ENCODE measurements at regions of chr22 and their contacts with region 1.

Region 1: DNA sequence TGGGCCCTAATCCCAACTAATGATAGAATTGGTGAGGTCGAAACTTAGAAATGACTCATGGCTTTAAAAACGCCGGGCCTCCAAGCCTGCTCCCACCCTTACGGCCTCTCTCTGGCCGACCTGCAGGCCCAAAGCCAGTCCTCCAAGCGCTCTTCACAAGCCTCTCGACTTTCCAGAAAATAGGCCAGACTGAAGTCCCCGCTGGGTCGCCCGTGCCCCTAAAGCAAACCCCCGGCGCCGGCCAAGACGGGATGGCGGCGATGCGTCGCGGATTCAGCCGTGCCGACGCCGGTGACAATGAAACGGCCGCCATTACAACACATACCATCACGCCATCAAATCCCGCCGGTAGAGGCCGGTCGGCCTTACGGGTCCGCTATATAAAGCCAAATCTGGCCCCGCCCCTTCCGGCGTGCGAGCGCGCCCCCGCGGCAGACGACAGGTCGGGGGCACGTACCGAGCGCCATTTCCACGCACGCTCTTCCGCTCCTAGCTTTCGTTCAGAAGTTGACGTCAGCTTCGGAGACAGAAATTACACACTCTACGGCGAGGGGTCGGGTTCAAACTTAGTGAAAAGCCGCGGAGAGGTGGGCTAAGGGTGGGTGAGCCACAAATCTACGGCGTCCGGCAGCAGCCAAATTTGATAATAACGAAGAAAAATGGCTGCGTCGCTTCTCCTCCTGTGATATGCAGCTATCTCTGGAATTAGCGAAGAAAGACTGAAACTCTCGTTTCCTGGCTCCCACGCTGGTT is at the start of gene RPL3:
- DNase-seq: peak; percentile 98
- total RNA-seq, gene RPL3: 317 TPM

Region 2: GRCh38 chr22:39013942-39014722 is 305.3 kb before region 1 on chr22 and contains the start of gene APOBEC3C:
- intact Hi-C with region 1: loop called (anchors 10 kb)
- DNase-seq: peak; percentile 90
- total RNA-seq, gene APOBEC3C: 22.1 TPM

Region 3: GRCh38 chr22:39152511-39153219 is 166.8 kb before region 1 on chr22 and contains the start of gene CBX7:
- intact Hi-C with region 1: loop called (anchors 1 kb)
- DNase-seq: peak; percentile 97
- total RNA-seq, gene CBX7: 89.6 TPM

Region 4: GRCh38 chr22:39170825-39171622 is 148.4 kb before region 1 on chr22:
- intact Hi-C with region 1: loop called (anchors 1 kb)
- DNase-seq: peak; percentile 95

Region 5: GRCh38 chr22:39405346-39406085 is 86.1 kb after region 1 on chr22:
- intact Hi-C with region 1: no loop called
- DNase-seq: no peak

Measured in cardiac septum (tissue), 1 donor.